AG04449 (cell line): ENCODE measurements at regions of chr9 and their contacts with region 1.

Region 1: DNA sequence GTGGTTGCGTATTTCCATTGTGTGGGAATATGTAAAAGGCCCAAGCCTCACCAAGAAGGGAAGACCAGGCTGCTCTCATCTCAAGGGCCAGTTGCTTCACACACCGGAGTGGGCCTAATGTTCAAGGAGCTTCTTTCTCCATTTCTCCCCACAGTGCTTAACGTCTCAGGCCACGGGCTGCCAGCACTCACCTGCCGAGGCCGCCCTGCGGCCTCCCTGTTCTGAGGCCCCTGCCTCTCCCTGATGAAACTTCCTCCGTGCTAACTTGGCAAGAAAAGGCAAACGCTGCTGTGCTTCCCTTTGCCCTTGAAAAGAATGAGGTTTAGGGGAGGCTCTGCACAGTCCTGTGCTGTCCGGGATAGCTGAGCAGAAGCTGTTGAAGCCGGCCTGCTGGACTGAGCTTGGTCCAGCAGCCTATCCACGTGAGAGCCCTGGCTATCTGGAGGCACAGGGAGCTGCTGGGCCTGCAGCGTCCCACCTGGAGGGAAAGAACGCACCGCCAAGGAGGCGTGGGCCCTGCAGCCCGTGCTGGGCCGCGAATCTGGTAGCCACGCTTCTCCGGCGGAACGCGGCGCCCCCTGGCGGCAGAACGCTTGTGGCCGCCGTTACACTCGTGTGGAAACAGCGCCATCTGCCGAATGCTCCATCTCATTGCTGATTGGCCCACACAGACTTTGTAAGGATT is 73.5 kb upstream of the PRSS3 start:
- DNase-seq: peak; percentile 10
- H3K4me3 ChIP-seq: no peak overlapping the region
- CTCF ChIP-seq: peak; percentile 99

Region 2: DNA sequence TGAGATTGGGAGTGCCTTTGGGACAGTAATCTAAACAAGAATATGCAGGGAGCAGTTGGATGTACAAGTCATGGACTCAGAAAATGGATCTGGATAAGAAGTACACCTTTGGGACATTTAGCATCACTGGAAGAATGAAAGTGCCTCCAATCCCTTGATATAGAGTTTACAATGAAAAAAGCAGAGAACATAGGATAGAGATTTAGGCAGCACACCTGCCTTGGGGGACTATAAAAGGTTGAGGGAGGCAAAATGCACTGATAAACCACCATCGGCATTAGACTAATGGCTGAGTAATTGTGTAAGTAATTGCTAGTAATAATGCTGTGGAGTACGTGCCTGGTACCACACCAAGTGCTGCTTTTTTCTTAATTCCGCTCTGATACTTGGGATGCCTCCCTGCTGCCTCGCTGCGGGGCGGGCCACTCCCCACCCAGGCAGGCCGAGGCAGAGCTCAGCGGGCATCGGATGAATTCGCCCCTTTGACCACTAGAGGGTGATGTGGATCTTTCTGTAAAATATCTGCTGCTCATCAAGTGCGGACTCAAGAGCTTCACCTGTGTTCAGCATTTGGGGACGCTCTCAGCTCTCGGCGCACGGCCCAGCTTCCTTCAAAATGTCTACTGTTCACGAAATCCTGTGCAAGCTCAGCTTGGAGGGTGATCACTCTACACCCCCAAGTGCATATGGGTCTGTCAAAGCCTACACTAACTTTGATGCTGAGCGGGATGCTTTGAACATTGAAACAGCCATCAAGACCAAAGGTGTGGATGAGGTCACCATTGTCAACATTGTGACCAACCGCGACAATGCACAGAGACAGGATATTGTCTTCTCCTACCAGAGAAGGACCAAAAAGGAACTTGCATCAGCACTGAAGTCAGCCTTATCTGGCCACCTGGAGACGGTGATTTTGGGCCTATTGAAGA is 97.9 kb before region 1 on chr9:
- CTCF ChIA-PET with region 1: interaction called, 591 read pairs
- POLR2A ChIA-PET with region 1: no interaction called
- DNase-seq: no peak
- H3K4me3 ChIP-seq: no peak overlapping the region
- CTCF ChIP-seq: peak; percentile 79

Region 3: DNA sequence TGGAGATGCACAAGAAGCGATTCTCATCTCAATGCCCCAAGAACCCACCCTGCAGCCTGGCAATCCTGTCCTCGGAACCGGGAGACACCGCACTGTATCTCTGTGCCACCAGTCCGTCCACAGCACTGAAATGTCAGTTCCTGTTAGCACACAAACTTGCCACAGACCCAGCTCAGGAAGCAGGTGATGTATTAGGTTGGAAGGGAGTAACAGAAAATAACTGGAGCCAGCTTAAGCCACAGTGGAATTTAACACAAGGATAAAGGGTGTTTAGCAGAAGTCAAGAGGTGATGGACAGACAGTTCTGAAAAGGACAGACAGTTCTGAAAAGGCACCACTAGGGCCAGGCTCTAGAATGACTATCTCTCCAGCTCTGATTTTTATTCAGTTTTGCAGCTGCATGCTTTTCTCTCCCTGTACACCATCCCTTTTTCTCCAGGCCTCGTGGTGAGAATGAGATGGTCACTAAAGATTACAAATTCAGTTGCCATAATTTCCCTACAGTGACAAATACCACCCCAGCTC is 83.4 kb before region 1 on chr9:
- CTCF ChIA-PET with region 1: interaction called, 10 read pairs
- POLR2A ChIA-PET with region 1: no interaction called
- DNase-seq: no peak
- H3K4me3 ChIP-seq: no peak overlapping the region
- CTCF ChIP-seq: no peak

Region 4: DNA sequence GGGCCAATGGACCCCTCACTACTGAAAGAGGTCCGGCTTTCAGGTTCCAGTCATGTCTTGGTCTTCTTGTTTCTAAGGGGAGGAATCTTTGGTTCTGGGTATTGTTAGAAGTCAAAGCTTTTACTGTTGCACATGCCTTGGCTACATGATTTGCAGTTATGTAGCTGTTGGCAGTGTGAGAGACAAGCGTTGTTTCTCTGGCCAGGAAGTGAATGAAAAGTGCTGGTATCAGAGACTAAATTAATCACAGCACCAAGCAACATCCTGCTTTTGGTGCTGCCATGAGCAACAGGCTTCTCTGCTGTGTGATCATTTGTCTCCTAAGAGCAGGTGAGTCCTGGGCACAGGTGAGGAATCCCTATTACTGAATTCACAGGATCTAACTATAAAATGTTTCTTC is 26.5 kb before region 1 on chr9:
- CTCF ChIA-PET with region 1: interaction called, 17 read pairs
- POLR2A ChIA-PET with region 1: no interaction called
- DNase-seq: no peak
- H3K4me3 ChIP-seq: no peak overlapping the region
- CTCF ChIP-seq: no peak

Region 5: GRCh38 chr9:33709269-33709668 is 12.5 kb before region 1 on chr9:
- CTCF ChIA-PET with region 1: interaction called, 45 read pairs
- POLR2A ChIA-PET with region 1: no interaction called
- DNase-seq: no peak
- H3K4me3 ChIP-seq: no peak overlapping the region
- CTCF ChIP-seq: no peak

Region 6: GRCh38 chr9:33737811-33738606 is 16.2 kb after region 1 on chr9:
- CTCF ChIA-PET with region 1: interaction called, 21 read pairs
- POLR2A ChIA-PET with region 1: no interaction called
- DNase-seq: peak; percentile 14
- H3K4me3 ChIP-seq: no peak overlapping the region
- CTCF ChIP-seq: peak; percentile 79

Region 7: GRCh38 chr9:34252670-34253459 is 531.0 kb after region 1 on chr9:
- CTCF ChIA-PET with region 1: no interaction called
- POLR2A ChIA-PET with region 1: no interaction called
- DNase-seq: no peak
- H3K4me3 ChIP-seq: no peak overlapping the region
- CTCF ChIP-seq: peak; percentile 82